ENCODE measurements at regions of chr1 and their contacts with region 1.

Region 1: DNA sequence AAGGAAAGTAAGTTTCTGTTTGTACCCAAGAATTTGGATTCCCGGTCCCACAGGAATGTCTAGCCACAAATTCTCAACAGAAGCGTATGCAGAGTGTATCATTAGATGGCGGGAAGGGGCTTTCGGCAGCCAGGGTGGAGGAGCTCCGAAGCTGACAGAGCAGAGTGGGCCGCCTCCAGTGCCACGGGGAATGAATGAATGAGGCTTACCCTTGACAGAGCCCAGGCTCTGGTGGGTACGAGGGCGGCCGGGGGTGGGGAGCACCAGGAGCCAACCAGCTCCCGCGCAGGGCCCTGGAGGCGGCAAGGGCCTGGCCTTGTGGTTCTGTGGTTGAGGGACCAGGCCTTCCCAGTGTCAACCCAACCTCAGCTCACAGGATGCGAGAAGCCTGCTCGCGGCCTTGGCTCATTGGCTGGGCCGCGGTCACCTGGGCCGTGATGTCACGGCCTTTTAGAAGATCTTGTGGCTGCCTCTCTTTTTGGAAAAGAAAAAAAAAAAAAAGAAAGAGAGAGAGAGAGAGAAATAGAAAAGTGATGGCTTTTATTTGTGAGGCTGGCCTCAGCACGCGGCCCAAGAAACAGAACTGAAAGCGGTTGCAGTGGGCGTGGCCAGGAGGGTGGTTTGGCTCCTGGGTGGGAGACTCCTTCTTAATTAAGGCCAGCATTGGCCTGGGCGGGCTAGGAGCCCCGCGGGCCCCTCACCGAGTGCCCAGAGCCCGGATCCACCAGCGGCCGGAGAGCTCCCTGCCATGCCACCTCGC is 34.9 kb upstream of the RUNX3 start:
- DNase-seq: peak; percentile 97
- H3K4me3 Mint-ChIP-seq: peak overlapping the region; percentile 96
- H3K27ac Mint-ChIP-seq: peak overlapping the region; percentile 91
- H3K4me1 Mint-ChIP-seq: peaks cover 84% of the 10 kb centered on the region
- H3K27me3 Mint-ChIP-seq: no peaks in the 10 kb centered on the region

Region 2: GRCh38 chr1:24930204-24931145 is 34.5 kb before region 1 on chr1 and contains the start of gene RUNX3:
- CTCF ChIA-PET with region 1: interaction called, 18 read pairs
- DNase-seq: peak; percentile 93
- H3K4me3 Mint-ChIP-seq: peak within 1 kb of the TSS; percentile 93
- H3K27ac Mint-ChIP-seq: peak within 1 kb of the TSS; percentile 93
- H3K4me1 Mint-ChIP-seq: peaks cover 68% of the 10 kb centered on the region
- H3K27me3 Mint-ChIP-seq: no peaks in the 10 kb centered on the region

Region 3: GRCh38 chr1:24980836-24981630 is 16.0 kb after region 1 on chr1:
- CTCF ChIA-PET with region 1: interaction called, 12 read pairs
- DNase-seq: no peak
- H3K4me3 Mint-ChIP-seq: no peak overlapping the region
- H3K27ac Mint-ChIP-seq: peak overlapping the region; percentile 88
- H3K4me1 Mint-ChIP-seq: peaks cover 96% of the 10 kb centered on the region
- H3K27me3 Mint-ChIP-seq: no peaks in the 10 kb centered on the region

Region 4: GRCh38 chr1:25022361-25023189 is 57.6 kb after region 1 on chr1:
- CTCF ChIA-PET with region 1: interaction called, 19 read pairs
- DNase-seq: peak; percentile 98
- H3K4me3 Mint-ChIP-seq: peak overlapping the region; percentile 70
- H3K27ac Mint-ChIP-seq: peak overlapping the region; percentile 99
- H3K4me1 Mint-ChIP-seq: peaks cover 97% of the 10 kb centered on the region
- H3K27me3 Mint-ChIP-seq: no peaks in the 10 kb centered on the region

Region 5: DNA sequence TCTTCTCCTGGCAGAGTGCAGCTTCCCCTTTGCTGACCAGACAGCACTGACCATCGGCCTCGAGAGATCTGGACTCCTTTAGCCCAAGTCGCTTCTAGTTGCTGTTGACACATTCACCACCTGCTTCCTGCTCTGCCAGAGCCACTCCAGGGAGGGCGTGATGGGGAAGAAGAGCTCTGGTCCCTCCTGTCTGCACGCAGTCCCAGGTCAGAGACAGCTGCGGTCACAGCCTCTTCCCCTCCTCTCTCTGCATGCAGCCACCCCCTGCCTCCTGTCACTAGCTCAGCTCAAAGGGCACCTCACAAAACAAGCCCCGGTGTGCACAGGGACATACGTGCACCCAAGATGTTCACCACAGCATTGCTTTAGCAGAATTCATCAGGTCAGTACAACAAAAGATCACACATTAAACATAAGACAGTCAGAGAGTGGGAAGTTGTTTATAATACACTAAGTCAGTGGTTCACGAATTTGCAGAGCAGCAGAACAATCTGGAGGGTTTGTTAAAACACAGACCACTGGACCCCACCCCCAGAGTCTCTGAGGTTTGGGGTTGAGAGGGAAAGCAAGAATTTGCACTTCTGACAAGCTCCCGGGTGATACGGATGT is 134.5 kb after region 1 on chr1:
- CTCF ChIA-PET with region 1: interaction called, 38 read pairs
- DNase-seq: peak; percentile 58
- H3K4me3 Mint-ChIP-seq: peak overlapping the region; percentile 23
- H3K27ac Mint-ChIP-seq: peak overlapping the region; percentile 80
- H3K4me1 Mint-ChIP-seq: peaks cover 73% of the 10 kb centered on the region
- H3K27me3 Mint-ChIP-seq: peaks cover 40% of the 10 kb centered on the region

Region 6: DNA sequence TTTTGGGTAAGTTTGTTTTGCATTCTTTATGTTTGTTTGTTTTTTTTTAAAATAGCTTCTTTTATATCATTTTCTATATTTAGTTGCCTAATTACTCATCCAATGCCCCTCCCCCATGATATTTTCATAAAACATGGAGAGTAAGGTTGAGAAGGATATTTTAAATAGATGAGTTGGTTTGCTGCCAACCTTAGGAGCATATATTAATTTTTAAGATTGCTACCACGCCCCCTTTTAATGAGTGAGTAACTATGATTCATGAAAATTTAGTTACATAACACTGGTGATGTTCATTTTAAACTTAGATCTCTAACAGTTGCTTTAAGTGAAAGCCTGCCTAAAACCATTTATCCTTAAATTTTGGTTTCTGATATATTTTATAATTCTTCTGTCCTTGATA is 391.9 kb after region 1 on chr1:
- CTCF ChIA-PET with region 1: no interaction called
- DNase-seq: no peak
- H3K4me3 Mint-ChIP-seq: peak overlapping the region; percentile 27
- H3K27ac Mint-ChIP-seq: peak overlapping the region; percentile 86
- H3K4me1 Mint-ChIP-seq: peaks cover 62% of the 10 kb centered on the region
- H3K27me3 Mint-ChIP-seq: no peaks in the 10 kb centered on the region

Measured in activated naive CD4-positive, alpha-beta T cell treated with anti-CD3 and anti-CD28 coated beads, Interleukin-2, amount 10 ng/mL, durations not matched to agents 7 days and 5 days (primary cell).